Activated CD4-positive, alpha-beta memory T cell treated with anti-CD3 and anti-CD28 coated beads for 36 hours (primary cell): ENCODE measurements at regions of chr10 and their contacts with region 1.

Region 1: GRCh38 chr10:106175760-106176377 is 988.6 kb downstream of the SORCS1 start:
- DNase-seq: no peak
- H3K4me3 Mint-ChIP-seq: no peak overlapping the region
- H3K27ac Mint-ChIP-seq: no peak overlapping the region
- H3K4me1 Mint-ChIP-seq: no peaks in the 10 kb centered on the region
- H3K27me3 Mint-ChIP-seq: no peaks in the 10 kb centered on the region

Region 2: GRCh38 chr10:105797234-105797890 is 378.5 kb before region 1 on chr10:
- CTCF ChIA-PET with region 1: no interaction called
- POLR2A ChIA-PET with region 1: no interaction called
- intact Hi-C with region 1: loop called (anchors 5 kb)
- DNase-seq: no peak
- H3K4me3 Mint-ChIP-seq: no peak overlapping the region
- H3K27ac Mint-ChIP-seq: no peak overlapping the region
- H3K4me1 Mint-ChIP-seq: no peaks in the 10 kb centered on the region
- H3K27me3 Mint-ChIP-seq: no peaks in the 10 kb centered on the region

Region 3: GRCh38 chr10:105950410-105950809 is 225.5 kb before region 1 on chr10:
- CTCF ChIA-PET with region 1: no interaction called
- POLR2A ChIA-PET with region 1: no interaction called
- intact Hi-C with region 1: loop called (anchors 2 kb)
- DNase-seq: peak; percentile 23
- H3K4me3 Mint-ChIP-seq: no peak overlapping the region
- H3K27ac Mint-ChIP-seq: no peak overlapping the region
- H3K4me1 Mint-ChIP-seq: no peaks in the 10 kb centered on the region
- H3K27me3 Mint-ChIP-seq: no peaks in the 10 kb centered on the region

Region 4: GRCh38 chr10:106216085-106216484 is 40.2 kb after region 1 on chr10:
- CTCF ChIA-PET with region 1: no interaction called
- POLR2A ChIA-PET with region 1: no interaction called
- intact Hi-C with region 1: no loop called
- DNase-seq: no peak
- H3K4me3 Mint-ChIP-seq: no peak overlapping the region
- H3K27ac Mint-ChIP-seq: no peak overlapping the region
- H3K4me1 Mint-ChIP-seq: no peaks in the 10 kb centered on the region
- H3K27me3 Mint-ChIP-seq: no peaks in the 10 kb centered on the region